Activated CD8-positive, alpha-beta T cell treated with anti-CD3 and anti-CD28 coated beads for 36 hours (primary cell): ENCODE measurements at regions of chr17 and their contacts with region 1.

Region 1: DNA sequence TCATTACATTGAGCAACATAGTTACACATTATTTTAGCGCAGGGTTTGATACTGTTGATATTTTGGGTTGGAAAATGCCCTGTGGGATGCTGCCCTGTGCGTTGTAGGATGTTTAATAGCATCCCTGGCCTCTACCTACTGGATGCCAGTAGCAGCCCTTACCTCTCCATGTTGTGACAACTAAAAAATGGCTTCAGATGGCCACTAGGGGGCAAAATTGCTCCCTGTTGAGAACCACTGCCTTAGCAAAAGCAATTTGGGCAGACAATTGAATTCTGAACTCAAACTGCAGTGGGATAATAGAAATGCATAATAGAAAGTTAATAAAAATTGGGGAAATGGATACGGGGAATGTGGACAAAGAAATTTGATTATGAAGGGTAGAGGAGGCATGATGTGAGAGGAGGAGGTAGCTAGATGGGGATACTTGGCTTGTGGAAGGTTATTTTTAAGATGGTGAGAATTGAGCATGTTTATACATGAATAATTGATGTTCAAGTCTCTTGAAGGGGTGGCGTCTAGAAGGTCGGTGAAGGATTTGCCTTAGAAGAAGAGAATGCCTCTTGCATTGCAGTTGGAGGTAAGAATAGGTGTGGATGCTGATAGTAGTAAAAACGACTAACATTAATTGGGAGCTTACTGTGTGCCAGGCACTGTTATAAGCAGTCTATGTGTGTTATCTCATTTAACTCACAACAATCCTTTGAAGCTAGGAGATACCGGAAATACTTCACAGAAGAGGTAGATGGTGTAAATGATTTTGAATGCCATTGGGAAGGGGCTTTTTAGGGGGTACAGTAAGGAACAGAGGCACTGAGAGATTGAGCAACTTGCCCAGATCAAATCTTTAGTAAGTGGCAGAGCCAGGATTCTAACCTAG is 19.0 kb downstream of the HEATR9 start:
- DNase-seq: peak; percentile 73
- ATAC-seq: peak; percentile 85
- H3K4me3 Mint-ChIP-seq: no peak overlapping the region
- H3K27ac Mint-ChIP-seq: peak overlapping the region; percentile 40
- H3K4me1 Mint-ChIP-seq: peaks cover 12% of the 10 kb centered on the region
- H3K27me3 Mint-ChIP-seq: no peaks in the 10 kb centered on the region
- CTCF ChIP-seq: peak; percentile 88

Region 2: DNA sequence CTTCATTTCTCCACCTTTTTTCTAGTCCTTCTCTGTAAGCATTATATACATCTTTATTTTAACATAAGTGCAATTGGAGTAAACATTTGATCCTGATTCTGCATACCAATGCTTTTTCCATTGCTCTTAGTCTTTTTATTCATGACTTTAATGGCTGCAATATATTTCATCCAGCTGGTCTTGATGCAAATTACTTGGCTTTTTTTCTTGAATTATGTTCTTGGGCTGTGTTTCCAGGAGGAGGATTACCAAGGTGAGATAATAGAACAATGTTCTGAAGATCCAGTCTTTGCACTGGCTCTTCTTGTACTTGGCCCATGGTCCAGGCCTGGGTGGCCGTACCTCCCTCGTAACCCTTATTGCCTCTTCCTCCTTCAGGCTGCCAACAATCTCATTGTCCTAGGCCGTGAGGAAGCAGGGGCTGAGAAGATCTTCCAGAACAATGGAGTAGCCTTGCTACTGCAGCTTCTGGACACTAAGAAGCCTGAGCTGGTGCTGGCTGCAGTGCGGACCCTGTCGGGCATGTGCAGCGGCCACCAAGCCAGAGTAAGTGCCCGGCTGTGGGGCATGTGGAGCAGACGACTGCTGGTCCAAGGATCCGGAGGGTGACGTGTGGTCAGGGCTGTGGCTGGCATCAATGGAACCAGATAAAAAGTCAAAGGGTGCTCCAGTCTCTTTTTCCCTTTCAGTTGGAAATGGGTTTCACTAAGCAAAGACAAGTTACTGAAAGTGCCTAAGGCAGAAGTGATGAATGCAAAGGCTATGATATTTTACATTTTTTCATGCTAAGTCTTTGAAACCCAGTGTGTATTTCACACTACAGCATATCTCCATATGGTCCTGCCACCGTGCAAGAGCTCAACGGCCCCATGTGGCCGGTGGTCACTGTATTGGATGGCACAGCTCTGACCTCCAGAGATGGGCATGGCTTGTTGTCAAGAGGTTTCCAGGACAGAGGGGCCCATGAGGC is 695.2 kb before region 1 on chr17:
- CTCF ChIA-PET with region 1: no interaction called
- POLR2A ChIA-PET with region 1: no interaction called
- intact Hi-C with region 1: no loop called
- DNase-seq: no peak
- ATAC-seq: no peak
- H3K4me3 Mint-ChIP-seq: no peak overlapping the region
- H3K27ac Mint-ChIP-seq: no peak overlapping the region
- H3K4me1 Mint-ChIP-seq: peaks cover 7% of the 10 kb centered on the region
- H3K27me3 Mint-ChIP-seq: no peaks in the 10 kb centered on the region
- CTCF ChIP-seq: no peak

Region 3: DNA sequence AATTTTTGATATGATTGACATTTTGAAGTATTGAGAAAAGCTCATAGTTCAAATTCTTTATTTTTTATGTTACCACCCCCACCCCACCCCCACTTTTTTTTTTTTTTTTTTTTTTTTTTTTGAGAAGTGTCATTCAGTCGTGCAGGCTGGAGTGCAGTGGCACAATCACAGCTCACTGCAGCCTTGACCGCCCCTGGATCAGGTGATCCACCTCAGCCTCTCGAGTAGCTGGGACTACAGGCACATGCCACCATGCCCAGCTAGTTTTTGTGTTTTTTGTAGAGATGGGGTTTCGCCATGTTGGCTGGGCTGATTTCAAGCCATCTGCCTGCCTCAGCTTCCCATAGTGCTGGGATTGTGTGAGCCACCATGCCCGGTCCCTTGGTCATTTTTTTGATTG is 33.0 kb before region 1 on chr17:
- CTCF ChIA-PET with region 1: interaction called, 12 read pairs
- POLR2A ChIA-PET with region 1: no interaction called
- intact Hi-C with region 1: no loop called
- DNase-seq: no peak
- ATAC-seq: no peak
- H3K4me3 Mint-ChIP-seq: no peak overlapping the region
- H3K27ac Mint-ChIP-seq: no peak overlapping the region
- H3K4me1 Mint-ChIP-seq: peaks cover 57% of the 10 kb centered on the region
- H3K27me3 Mint-ChIP-seq: no peaks in the 10 kb centered on the region
- CTCF ChIP-seq: no peak

Region 4: DNA sequence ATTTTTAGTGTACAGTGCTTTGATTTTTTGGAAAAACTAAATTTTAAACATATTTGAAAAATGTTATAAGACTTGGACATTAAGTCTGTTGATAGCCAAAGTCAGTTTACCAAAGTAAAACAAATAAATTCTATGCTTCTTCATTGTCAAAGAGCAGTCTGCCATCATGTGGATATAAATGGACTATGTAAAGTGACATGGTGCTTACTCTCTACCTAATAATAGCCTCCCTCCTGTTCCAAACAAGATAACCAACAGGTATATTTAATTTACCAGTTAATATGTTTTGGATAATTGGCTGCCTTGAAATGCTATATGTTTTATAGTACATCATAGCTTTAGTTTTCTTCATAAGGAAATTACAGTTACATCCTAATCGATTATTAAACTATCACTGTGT is 24.5 kb before region 1 on chr17:
- CTCF ChIA-PET with region 1: interaction called, 12 read pairs
- POLR2A ChIA-PET with region 1: interaction called, 5 read pairs
- intact Hi-C with region 1: no loop called
- DNase-seq: no peak
- ATAC-seq: no peak
- H3K4me3 Mint-ChIP-seq: no peak overlapping the region
- H3K27ac Mint-ChIP-seq: no peak overlapping the region
- H3K4me1 Mint-ChIP-seq: peaks cover 16% of the 10 kb centered on the region
- H3K27me3 Mint-ChIP-seq: no peaks in the 10 kb centered on the region
- CTCF ChIP-seq: no peak

Region 5: GRCh38 chr17:35865412-35866340 is 16.0 kb after region 1 on chr17:
- CTCF ChIA-PET with region 1: interaction called, 16 read pairs
- POLR2A ChIA-PET with region 1: interaction called, 3 read pairs
- intact Hi-C with region 1: no loop called
- DNase-seq: no peak
- ATAC-seq: no peak
- H3K4me3 Mint-ChIP-seq: no peak overlapping the region
- H3K27ac Mint-ChIP-seq: peak overlapping the region; percentile 8
- H3K4me1 Mint-ChIP-seq: peaks cover 19% of the 10 kb centered on the region
- H3K27me3 Mint-ChIP-seq: no peaks in the 10 kb centered on the region
- CTCF ChIP-seq: no peak

Region 6: DNA sequence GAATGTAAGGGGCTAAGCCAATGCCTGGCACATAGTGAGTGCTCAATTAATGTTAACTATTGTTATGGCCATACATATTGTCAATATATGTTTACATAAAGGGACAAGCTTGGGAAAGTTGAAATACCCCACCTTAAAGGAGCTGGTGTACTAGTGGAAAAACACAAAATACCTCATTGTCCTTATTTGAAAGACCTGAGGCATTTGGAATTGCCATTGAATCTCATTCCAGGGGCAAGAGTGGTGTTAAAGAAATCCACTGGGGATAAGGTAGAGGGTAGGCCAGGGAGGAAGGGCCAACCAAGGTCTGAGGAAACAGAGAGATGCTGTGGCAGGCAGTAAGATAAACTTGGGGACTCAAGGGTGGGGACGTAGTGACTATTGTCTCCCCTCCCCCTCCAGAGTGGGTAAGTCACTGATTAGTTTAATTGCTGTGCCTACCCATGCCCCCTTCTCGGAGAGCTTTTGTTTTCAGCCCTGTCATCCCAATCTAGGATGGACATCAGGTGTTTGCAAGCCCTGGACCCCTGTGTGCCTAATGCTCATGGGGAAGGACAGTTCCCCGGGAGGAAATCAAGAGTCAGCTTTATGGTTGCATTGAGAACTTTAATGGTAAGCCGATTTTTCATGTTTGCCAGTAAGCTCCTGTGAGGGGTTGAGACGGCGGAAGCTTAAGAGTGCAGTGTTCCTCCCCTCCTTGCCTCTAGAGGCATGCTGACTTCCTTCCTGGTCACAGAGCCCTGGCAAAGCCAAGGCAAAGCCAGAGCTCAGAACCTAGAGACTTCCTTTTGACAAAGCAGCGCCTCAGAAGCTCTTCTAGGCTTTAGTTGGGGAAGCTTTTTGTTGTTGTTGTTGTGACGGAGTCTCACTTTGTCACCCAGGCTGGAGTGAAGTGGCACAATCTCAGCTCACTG is 21.5 kb after region 1 on chr17:
- CTCF ChIA-PET with region 1: interaction called, 16 read pairs
- POLR2A ChIA-PET with region 1: interaction called, 3 read pairs
- intact Hi-C with region 1: no loop called
- DNase-seq: peak; percentile 44
- ATAC-seq: peak; percentile 72
- H3K4me3 Mint-ChIP-seq: no peak overlapping the region
- H3K27ac Mint-ChIP-seq: peak overlapping the region; percentile 61
- H3K4me1 Mint-ChIP-seq: peaks cover 41% of the 10 kb centered on the region
- H3K27me3 Mint-ChIP-seq: no peaks in the 10 kb centered on the region
- CTCF ChIP-seq: no peak

Region 7: DNA sequence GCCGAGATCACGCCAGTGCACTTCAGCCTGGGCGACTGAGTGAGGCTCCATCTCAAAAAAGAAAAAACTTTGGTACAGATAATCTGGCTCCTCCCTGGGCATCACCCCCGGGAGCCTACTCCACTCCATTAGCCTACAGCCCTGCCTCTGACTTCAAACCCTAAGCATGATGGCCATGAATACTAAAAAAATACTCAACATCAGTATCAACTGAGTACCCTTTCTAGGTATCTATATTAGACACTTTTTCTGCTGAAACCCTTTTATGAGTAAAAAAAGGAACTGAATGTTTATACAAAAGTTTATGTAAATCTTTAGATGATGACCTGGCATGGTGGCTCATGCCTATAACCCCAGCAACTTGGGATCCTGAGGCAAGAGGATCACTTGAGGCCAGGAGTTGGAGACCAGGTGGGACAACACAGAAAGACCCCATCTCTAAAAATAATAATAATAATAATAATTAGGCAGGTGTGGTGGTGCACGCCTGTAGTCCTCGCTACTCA is 74.0 kb after region 1 on chr17:
- CTCF ChIA-PET with region 1: interaction called, 12 read pairs
- POLR2A ChIA-PET with region 1: no interaction called
- intact Hi-C with region 1: no loop called
- DNase-seq: no peak
- ATAC-seq: no peak
- H3K4me3 Mint-ChIP-seq: no peak overlapping the region
- H3K27ac Mint-ChIP-seq: no peak overlapping the region
- H3K4me1 Mint-ChIP-seq: peaks cover 34% of the 10 kb centered on the region
- H3K27me3 Mint-ChIP-seq: no peaks in the 10 kb centered on the region
- CTCF ChIP-seq: no peak

Region 8: GRCh38 chr17:35930211-35931065 is 80.7 kb after region 1 on chr17 and contains the start of gene RDM1:
- CTCF ChIA-PET with region 1: interaction called, 14 read pairs
- POLR2A ChIA-PET with region 1: no interaction called
- intact Hi-C with region 1: no loop called
- DNase-seq: peak; percentile 94
- ATAC-seq: peak; percentile 99
- H3K4me3 Mint-ChIP-seq: peak within 1 kb of the TSS; percentile 81
- H3K27ac Mint-ChIP-seq: peak within 1 kb of the TSS; percentile 80
- H3K4me1 Mint-ChIP-seq: peaks cover 21% of the 10 kb centered on the region
- H3K27me3 Mint-ChIP-seq: peaks cover 3% of the 10 kb centered on the region
- CTCF ChIP-seq: no peak
- total RNA-seq, gene RDM1: 12.6 to 16.0 TPM

Region 9: DNA sequence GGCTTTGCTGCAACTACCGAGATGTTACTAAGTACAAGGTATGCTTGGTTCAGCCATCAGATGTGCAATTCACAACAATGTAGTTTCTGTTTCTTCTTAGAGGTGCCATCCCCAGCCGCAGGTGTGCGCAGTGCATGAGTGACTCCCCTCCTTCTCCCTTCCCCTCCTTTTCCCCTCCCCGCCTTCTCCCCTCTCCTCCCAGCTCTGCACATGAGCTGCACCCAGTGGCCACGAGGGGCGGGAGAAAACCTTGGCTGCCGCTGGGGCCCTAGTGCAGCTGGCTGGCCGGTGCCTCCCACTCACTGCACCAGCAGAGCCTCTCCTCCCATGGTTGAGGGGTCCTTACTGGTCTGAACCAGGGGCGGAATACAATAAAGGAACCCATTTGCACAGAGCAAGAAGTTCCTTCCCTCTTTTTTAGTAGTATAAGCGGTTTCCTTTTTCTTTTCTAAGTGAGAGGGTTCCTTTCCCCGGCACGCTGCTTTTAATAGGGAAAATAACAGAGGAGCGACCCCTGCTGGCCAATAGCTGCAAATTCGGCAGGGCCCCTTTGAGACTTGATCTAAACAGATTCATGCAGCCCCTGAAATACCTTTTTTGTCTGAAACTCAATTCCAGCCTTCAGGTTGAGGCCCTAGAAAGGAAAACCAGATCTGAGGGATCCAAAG is 159.4 kb after region 1 on chr17:
- CTCF ChIA-PET with region 1: no interaction called
- POLR2A ChIA-PET with region 1: no interaction called
- intact Hi-C with region 1: no loop called
- DNase-seq: peak; percentile 25
- ATAC-seq: no peak
- H3K4me3 Mint-ChIP-seq: no peak overlapping the region
- H3K27ac Mint-ChIP-seq: no peak overlapping the region
- H3K4me1 Mint-ChIP-seq: peaks cover 8% of the 10 kb centered on the region
- H3K27me3 Mint-ChIP-seq: peaks cover 2% of the 10 kb centered on the region
- CTCF ChIP-seq: peak; percentile 33

Region 10: GRCh38 chr17:36027761-36028160 is 178.1 kb after region 1 on chr17:
- CTCF ChIA-PET with region 1: no interaction called
- POLR2A ChIA-PET with region 1: no interaction called
- intact Hi-C with region 1: no loop called
- DNase-seq: no peak
- ATAC-seq: no peak
- H3K4me3 Mint-ChIP-seq: no peak overlapping the region
- H3K27ac Mint-ChIP-seq: no peak overlapping the region
- H3K4me1 Mint-ChIP-seq: no peaks in the 10 kb centered on the region
- H3K27me3 Mint-ChIP-seq: peaks cover 14% of the 10 kb centered on the region
- CTCF ChIP-seq: no peak

Region 11: GRCh38 chr17:36142235-36142634 is 292.5 kb after region 1 on chr17:
- CTCF ChIA-PET with region 1: no interaction called
- POLR2A ChIA-PET with region 1: no interaction called
- intact Hi-C with region 1: no loop called
- DNase-seq: no peak
- ATAC-seq: no peak
- H3K4me3 Mint-ChIP-seq: no peak overlapping the region
- H3K27ac Mint-ChIP-seq: no peak overlapping the region
- H3K4me1 Mint-ChIP-seq: peaks cover 20% of the 10 kb centered on the region
- H3K27me3 Mint-ChIP-seq: peaks cover 2% of the 10 kb centered on the region
- CTCF ChIP-seq: no peak